ENCODE measurements at regions of chr3 and their contacts with region 1.

Region 1: DNA sequence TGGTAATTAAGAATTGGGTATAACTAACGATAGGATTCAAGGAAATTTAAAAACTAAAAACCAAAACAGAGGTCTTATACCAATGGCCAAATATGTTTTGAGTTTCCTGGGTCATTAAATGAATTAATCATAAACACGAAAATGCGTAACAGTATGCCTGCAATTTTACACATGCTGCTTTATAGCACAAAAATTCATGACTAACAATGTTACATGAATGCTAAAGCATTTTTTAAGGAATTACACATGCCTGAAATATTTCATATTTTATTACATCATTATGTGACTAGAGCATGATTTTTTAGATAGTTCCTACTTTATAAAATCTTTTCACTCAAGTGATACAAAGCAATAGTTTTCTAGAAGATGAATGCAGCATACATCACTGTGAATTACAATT is 74.7 kb downstream of the ZNF148 start:
- DNase-seq: no peak
- ATAC-seq: no peak
- H3K4me3 ChIP-seq: no peak overlapping the region
- H3K27ac ChIP-seq: no peak overlapping the region
- H3K4me1 ChIP-seq: peaks cover 0 to 20% (median 1%) of the 10 kb centered on the region in 9 donors
- H3K27me3 ChIP-seq: no peaks in the 10 kb centered on the region
- CTCF ChIP-seq: no peak

Region 2: GRCh38 chr3:125011941-125012340 is 288.5 kb before region 1 on chr3:
- intact Hi-C with region 1: loop called in 1 of 10 experiments (anchors 10 kb)
- DNase-seq: no peak
- ATAC-seq: no peak
- H3K4me3 ChIP-seq: no peak overlapping the region
- H3K27ac ChIP-seq: no peak overlapping the region
- H3K4me1 ChIP-seq: peaks cover 0 to 44% (median 9%) of the 10 kb centered on the region in 9 donors
- H3K27me3 ChIP-seq: no peaks in the 10 kb centered on the region
- CTCF ChIP-seq: no peak

Region 3: GRCh38 chr3:125257536-125257935 is 42.9 kb before region 1 on chr3:
- intact Hi-C with region 1: no loop called
- DNase-seq: no peak
- ATAC-seq: no peak
- H3K4me3 ChIP-seq: no peak overlapping the region
- H3K27ac ChIP-seq: no peak overlapping the region
- H3K4me1 ChIP-seq: peaks cover 0 to 4% (median 0%) of the 10 kb centered on the region in 9 donors
- H3K27me3 ChIP-seq: no peaks in the 10 kb centered on the region
- CTCF ChIP-seq: no peak

Measured in heart right ventricle (tissue), 16 donors.